HAP-1 (cell line): ENCODE measurements at regions of chr11 and their contacts with region 1.

Region 1: GRCh38 chr11:122505304-122506006 is 150.1 kb upstream of the UBASH3B start:
- DNase-seq: peak; percentile 51 to 74
- H3K4me3 ChIP-seq: no peak overlapping the region
- H3K4me1 ChIP-seq: no peaks in the 10 kb centered on the region
- H3K27me3 ChIP-seq: peaks cover 14% of the 10 kb centered on the region

Region 2: DNA sequence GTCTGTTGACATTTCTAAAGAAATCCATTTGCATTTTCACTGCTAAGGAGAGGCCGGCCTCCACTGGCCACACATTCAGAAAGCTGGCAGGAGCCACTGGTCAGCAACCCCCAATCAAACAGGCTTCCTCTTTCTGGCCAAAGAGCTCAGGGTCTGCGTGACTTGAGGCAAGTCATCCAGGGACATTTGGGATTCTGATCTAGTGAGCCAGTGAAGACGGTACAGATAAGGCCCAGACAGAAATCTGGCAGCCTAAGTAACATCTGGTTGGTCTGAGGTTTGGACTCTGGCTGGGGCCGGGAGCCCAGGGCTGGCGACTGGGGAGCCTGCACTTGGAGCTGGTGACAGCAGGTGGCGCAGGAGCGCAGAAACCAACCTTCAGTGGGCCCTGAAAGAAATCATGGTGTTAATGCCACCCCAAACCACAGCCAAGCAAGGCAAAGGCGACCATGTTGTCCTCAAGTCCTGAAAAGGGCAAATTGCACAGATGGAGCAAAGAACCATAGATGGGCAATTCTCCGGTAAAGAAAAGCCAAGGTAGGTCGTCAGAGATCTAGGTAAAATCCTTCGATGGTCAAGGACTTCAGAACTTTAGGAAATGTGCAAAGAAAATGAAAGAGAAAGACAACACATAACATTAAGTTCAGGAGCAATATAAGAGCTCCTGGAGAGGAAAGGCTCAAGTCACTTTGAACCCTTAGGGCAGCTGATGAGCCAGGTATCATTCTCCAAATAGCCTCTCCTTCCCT is 290.0 kb before region 1 on chr11:
- in situ Hi-C with region 1: loop called (anchors 5 kb)
- DNase-seq: peak; percentile 28 to 72
- H3K4me3 ChIP-seq: no peak overlapping the region
- H3K4me1 ChIP-seq: no peaks in the 10 kb centered on the region
- H3K27me3 ChIP-seq: no peaks in the 10 kb centered on the region

Region 3: DNA sequence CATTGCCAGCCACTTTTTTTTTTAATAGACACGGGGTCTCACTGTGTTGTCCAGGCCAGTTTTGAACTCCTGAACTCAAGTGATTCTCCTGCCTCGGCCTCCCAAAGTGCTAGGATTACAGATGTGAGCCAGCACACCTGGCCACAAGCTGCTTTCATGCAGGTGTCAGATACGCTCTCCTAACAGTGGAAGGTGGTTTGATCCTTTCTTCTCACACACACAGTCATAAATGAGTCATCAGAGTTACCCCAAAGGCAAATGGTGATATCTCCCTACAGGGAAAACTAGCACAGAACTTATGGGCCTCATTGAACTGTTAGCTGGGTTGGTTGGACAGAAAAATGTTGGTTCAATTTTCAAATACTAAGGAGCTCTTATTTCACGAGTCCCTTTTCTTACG is 111.8 kb after region 1 on chr11:
- in situ Hi-C with region 1: no loop called
- DNase-seq: no peak
- H3K4me3 ChIP-seq: no peak overlapping the region
- H3K4me1 ChIP-seq: no peaks in the 10 kb centered on the region
- H3K27me3 ChIP-seq: 0 out of 2 replicates have a peak, but pooled peaks cover 3% of the 10 kb centered on the region